ENCODE measurements at regions of chr9 and their contacts with region 1.

Region 1: GRCh38 chr9:36190388-36191287 is at the start of gene CLTA:
- DNase-seq: peak; percentile 99
- H3K4me3 ChIP-seq: peak within 1 kb of the TSS; percentile 65 to 97 (median 72)
- H3K27ac ChIP-seq: peak within 1 kb of the TSS; percentile 89
- H3K4me1 ChIP-seq: peaks cover 34% of the 10 kb centered on the region
- H3K27me3 ChIP-seq: no peaks in the 10 kb centered on the region
- CTCF ChIP-seq: peak; percentile 43 to 62
- total RNA-seq, gene CLTA: 130 to 217 TPM

Region 2: DNA sequence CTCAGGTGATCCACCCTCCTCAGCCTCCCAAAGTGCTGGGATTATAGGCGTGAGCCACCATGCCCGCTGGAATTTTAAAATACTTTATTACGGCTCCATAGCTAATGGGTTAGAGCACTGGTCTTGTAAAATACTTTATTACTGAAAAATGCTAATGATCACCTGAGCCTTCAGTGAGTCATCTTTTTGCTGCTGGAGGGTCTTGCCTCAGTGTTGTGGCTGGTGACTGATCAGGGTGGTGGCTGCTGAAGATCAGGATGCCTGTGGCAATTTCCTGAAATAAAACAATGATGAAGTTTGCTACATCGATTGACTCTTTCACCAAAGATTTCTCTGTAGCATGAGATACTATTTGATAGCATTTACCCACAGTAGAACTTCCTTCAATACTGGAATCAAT is 93.6 kb after region 1 on chr9:
- CTCF ChIA-PET with region 1: no interaction called
- dilution Hi-C with region 1: loop called (anchors 5 kb)
- in situ Hi-C with region 1: no loop called
- intact Hi-C with region 1: no loop called
- DNase-seq: peak; percentile 76
- H3K4me3 ChIP-seq: no peak overlapping the region
- H3K27ac ChIP-seq: peak overlapping the region; percentile 10
- H3K4me1 ChIP-seq: peaks cover 12% of the 10 kb centered on the region
- H3K27me3 ChIP-seq: no peaks in the 10 kb centered on the region
- CTCF ChIP-seq: no peak

Region 3: DNA sequence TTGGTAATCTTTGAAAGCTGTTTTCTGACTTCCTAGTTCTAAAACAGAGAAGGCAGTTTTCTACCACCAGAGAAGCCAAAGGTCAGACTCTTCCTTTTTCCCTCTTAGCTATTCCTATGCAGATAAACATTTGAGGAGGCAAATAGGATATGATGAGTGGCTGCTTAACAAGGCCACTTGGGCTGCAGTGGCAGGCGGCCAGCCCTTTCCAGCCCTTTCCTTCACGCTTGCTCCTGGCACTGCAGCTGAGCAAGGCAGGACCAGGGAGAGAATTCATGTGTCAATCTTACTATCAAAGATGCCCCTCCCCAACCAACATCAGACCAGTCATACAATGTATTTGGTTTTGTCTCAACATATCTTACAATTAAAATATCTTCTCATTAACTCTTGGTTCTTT is 246.3 kb after region 1 on chr9:
- CTCF ChIA-PET with region 1: no interaction called
- dilution Hi-C with region 1: no loop called
- in situ Hi-C with region 1: no loop called
- intact Hi-C with region 1: no loop called
- DNase-seq: no peak
- H3K4me3 ChIP-seq: no peak overlapping the region
- H3K27ac ChIP-seq: no peak overlapping the region
- H3K4me1 ChIP-seq: no peaks in the 10 kb centered on the region
- H3K27me3 ChIP-seq: no peaks in the 10 kb centered on the region
- CTCF ChIP-seq: no peak

Measured in mammary epithelial cell (primary cell).